Head of caudate nucleus (tissue), 42 donors: ENCODE measurements at regions of chr19 and their contacts with region 1.

Region 1: DNA sequence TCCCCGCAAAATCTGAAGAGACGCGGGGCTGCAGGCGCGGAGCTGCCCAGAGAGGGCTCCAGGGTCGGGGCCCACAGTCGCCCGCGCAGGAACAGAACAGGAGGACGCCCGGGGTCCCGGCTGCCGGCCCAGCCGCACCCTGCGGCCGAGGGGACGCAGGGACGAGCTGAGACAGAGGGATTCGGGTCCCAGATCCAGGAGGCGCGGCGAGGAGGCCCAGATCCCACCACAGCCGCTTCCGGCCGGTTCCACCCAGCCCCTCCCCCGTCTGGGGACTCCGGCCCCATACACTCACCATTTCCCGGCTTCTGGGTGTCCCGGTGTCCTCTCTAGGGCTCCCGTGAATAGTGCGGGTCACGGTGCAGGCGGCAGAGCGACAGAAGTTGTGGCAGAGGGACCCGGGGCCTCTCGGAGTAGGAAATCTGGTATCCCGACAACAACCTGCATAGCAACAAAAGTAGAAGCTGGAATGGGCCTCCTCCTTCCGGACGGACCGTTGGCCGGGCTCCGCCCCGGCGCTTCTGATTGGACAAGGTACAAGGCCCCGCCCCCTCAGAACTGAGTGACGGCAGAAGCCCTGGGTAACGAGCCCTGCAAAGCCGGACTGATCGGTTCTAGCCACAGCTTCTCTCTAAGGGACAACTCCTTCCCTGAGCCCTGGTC is at the start of gene ZNF20:
- DNase-seq: peak; percentile 90 to 99 (median 96)

Region 2: GRCh38 chr19:11798391-11799330 is 341.4 kb before region 1 on chr19 and contains the start of gene ZNF491:
- intact Hi-C with region 1: loop called (anchors 5 kb)
- DNase-seq: peak; percentile 93 to 99 (median 97)

Region 3: GRCh38 chr19:12064590-12065538 is 75.2 kb before region 1 on chr19 and contains the start of gene ZNF844:
- intact Hi-C with region 1: loop called (anchors 10 kb)
- DNase-seq: peak; percentile 96 to 99 (median 99)

Region 4: GRCh38 chr19:12187625-12188024 is 47.6 kb after region 1 on chr19:
- intact Hi-C with region 1: no loop called
- DNase-seq: no peak

Region 5: DNA sequence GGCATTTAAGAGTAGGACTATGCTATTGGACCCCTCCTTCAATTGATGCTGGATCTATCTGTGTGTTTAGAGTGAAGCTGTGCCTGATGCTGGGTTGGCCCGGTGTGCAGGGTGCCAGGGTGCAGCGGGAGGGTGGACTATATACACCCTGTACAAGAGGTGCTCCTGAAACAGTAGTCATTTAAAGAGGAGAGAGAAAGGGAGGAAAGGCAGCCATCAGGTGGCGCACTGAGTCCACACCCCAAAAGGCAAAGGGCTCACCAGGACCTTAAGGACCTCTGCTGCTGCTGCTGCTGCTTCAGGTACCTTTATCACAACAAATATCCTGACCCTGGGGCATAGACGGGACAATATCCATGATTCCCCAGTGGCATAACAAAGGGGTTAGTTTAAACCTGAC is 62.2 kb after region 1 on chr19:
- intact Hi-C with region 1: no loop called
- DNase-seq: no peak